ENCODE measurements at regions of chr6 and their contacts with region 1.

Region 1: GRCh38 chr6:73566954-73567591 is 46.2 kb upstream of the EEF1A1 start:
- H3K4me3 Mint-ChIP-seq: no peak overlapping the region
- H3K27ac Mint-ChIP-seq: peak overlapping the region; percentile 40
- H3K4me1 Mint-ChIP-seq: peaks cover 36% of the 10 kb centered on the region
- H3K27me3 Mint-ChIP-seq: no peaks in the 10 kb centered on the region

Region 2: GRCh38 chr6:73461537-73462350 is 105.3 kb before region 1 on chr6 and contains the start of gene MTO1:
- intact Hi-C with region 1: no loop called
- H3K4me3 Mint-ChIP-seq: peak within 1 kb of the TSS; percentile 96
- H3K27ac Mint-ChIP-seq: peak within 1 kb of the TSS; percentile 95
- H3K4me1 Mint-ChIP-seq: peaks cover 39% of the 10 kb centered on the region
- H3K27me3 Mint-ChIP-seq: no peaks in the 10 kb centered on the region

Region 3: GRCh38 chr6:73532293-73532692 is 34.8 kb before region 1 on chr6:
- intact Hi-C with region 1: loop called (anchors 5 kb)
- H3K4me3 Mint-ChIP-seq: no peak overlapping the region
- H3K27ac Mint-ChIP-seq: no peak overlapping the region
- H3K4me1 Mint-ChIP-seq: peaks cover 9% of the 10 kb centered on the region
- H3K27me3 Mint-ChIP-seq: peaks cover 7% of the 10 kb centered on the region